ENCODE measurements at regions of chr17 and their contacts with region 1.

Region 1: DNA sequence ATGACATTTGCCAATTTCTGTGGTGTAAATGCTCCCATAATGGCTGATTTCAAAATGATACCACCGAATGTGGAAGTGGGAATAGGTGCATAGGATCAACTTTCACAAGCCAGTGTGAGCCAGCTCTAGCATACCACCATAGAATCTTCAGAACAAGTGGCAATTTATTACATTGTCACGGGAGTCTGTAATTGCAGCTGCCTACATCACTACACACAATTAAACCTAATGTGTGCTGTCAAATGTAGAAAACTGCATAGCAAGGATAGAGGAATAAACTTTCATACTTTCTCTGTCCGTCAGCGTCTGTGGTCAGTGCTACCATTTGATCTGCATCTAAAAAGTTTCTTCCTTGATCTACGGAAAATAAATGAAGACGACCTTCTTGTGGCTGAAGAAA is 417.8 kb upstream of the TOM1L1 start:
- DNase-seq: no peak

Region 2: GRCh38 chr17:54505404-54505803 is 22.6 kb after region 1 on chr17:
- intact Hi-C with region 1: loop called in 1 of 2 experiments (anchors 1 kb)
- DNase-seq: no peak

Measured in posterior vena cava (tissue), 2 donors.